ENCODE measurements at regions of chr22 and their contacts with region 1.

Region 1: DNA sequence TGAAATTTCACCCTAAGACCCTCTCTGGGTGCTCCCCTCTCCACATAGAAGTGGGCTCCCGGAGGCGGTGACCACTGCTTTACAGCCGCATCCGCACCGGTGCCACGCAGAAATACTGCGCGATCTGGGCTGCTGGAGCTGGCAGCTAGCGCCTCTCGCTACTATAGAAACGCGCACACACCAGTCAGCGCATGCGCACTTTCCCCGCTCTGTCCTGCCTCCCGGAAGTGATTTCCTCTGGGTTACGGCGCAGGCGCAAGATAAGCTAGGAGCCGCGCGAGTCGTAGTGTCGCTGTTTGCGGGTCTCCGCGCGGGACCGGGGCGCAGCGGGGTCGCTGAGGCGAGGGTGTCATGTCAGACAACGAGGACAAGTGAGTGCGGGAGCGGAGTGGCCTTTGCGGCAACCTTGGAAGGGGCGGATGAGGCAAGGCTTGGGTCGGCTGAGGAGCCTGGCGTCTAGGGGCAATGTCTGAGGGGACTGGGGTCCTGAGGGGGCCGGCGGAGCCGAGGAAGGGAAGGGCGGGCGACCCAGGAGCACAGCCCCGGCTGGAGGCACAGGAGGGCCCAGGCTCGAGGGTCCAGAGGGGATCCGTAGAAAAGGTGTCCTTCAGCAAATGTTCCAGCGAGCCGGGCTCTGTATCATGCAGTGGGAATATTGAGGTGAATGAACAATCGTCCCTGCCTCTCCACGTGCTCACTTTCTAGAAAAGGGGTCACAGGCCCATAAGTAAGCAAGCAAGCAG is at the starts of genes C22orf23 and POLR2F:
- ATAC-seq: peak; percentile 89 to 96 (median 96)
- H3K4me3 ChIP-seq: peak within 1 kb of the TSS; percentile 68 to 97 (median 77)
- H3K27ac ChIP-seq: peak within 1 kb of the TSS; percentile 34 to 51
- H3K4me1 ChIP-seq: peaks cover 7 to 9% of the 10 kb centered on the region in 2 donors
- total RNA-seq, gene C22orf23: 0.63 to 4.3 (median 2.1) TPM
- total RNA-seq, gene POLR2F: 69.1 to 147 (median 106) TPM

Region 2: DNA sequence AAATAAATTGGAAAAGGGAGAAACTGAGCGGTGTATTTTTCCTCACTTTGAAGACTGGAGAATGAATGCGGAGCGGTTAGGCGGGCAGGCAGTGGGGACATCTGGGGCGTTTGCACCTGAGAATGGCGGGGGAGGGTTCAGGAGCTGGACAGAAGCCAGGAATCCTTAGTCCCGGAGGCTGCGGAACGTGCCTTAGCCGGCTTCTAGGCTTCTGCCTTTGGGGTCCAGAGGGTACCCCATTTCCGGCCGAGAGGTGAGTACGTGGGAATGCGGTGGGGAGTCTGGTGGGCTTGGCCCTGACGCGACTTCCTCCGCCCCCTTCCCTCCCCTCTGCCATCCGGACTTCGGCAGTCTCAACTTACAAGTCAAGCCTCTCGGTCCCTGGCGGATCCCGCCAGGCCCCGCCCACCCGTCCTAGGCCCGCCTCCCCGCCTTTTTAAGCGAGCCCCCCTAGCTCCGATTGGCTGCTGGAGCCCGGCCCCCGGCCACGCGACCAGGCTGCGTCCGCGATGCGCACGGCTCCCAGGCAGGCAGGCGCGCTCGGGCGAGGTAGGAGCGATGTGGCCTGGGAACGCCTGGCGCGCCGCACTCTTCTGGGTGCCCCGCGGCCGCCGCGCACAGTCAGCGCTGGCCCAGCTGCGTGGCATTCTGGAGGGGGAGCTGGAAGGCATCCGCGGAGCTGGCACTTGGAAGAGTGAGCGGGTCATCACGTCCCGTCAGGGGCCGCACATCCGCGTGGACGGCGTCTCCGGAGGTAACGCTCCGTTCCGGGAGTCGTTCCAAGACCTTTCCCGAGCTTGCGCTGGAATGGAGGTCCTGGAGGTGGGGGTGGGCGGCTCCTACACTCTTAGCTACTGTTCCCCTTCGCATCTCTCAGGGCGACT is 146.0 kb before region 1 on chr22 and contains the start of gene GCAT:
- in situ Hi-C with region 1: loop called in 2 of 9 experiments (anchors 25 kb)
- ATAC-seq: peak; percentile 66 to 83 (median 79)
- H3K4me3 ChIP-seq: peak within 1 kb of the TSS; percentile 48 to 97 (median 71)
- H3K27ac ChIP-seq: peak within 1 kb of the TSS in 1 of 2 donors; percentile 24
- H3K4me1 ChIP-seq: peaks cover 13 to 16% of the 10 kb centered on the region in 2 donors
- total RNA-seq, gene GCAT: 10.6 to 41.6 (median 14.6) TPM